PC-3 (cell line): ENCODE measurements at regions of chr2 and their contacts with region 1.

Region 1: GRCh38 chr2:173448938-173449471 is 94.3 kb downstream of the CDCA7 start:
- DNase-seq: peak; percentile 95
- ATAC-seq: peak; percentile 96
- H3K4me3 ChIP-seq: peak overlapping the region; percentile 60
- H3K27ac ChIP-seq: peak overlapping the region; percentile 35; the same call in 1 of the 2 replicates
- H3K4me1 ChIP-seq: peaks cover 11% of the 10 kb centered on the region; the same call in 1 of the 2 replicates
- H3K27me3 ChIP-seq: no peaks in the 10 kb centered on the region
- CTCF ChIP-seq: peak; percentile 86

Region 2: GRCh38 chr2:173555833-173556232 is 106.8 kb after region 1 on chr2:
- CTCF ChIA-PET with region 1: no interaction called
- POLR2A ChIA-PET with region 1: no interaction called
- intact Hi-C with region 1: loop called (anchors 10 kb)
- DNase-seq: no peak
- ATAC-seq: no peak
- H3K4me3 ChIP-seq: no peak overlapping the region
- H3K27ac ChIP-seq: no peak overlapping the region
- H3K4me1 ChIP-seq: 0 out of 2 replicates have a peak, but pooled peaks cover 8% of the 10 kb centered on the region
- H3K27me3 ChIP-seq: no peaks in the 10 kb centered on the region
- CTCF ChIP-seq: no peak

Region 3: DNA sequence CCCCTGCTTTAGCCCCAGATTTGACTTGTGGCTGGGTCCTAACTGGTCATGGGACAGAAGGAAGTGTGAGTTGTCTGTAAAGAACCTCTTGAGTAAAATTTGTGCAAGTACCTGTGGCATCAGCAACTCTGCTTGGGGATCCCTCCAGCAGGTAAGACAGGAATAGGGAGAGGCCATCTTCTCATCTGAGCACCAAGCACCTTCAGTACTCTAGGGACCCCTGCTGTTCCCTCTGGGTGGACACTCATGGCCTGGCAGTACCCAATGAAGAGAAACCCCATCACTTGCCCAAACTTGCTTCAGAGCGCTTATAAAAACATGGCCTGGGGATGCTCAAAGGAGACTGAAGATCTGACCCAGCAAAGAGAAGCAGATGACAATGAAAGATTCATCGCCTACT is 218.4 kb after region 1 on chr2:
- CTCF ChIA-PET with region 1: no interaction called
- POLR2A ChIA-PET with region 1: no interaction called
- intact Hi-C with region 1: loop called (anchors 5 kb)
- DNase-seq: peak; percentile 39
- ATAC-seq: peak; percentile 67
- H3K4me3 ChIP-seq: no peak overlapping the region
- H3K27ac ChIP-seq: no peak overlapping the region
- H3K4me1 ChIP-seq: peaks cover 13% of the 10 kb centered on the region
- H3K27me3 ChIP-seq: no peaks in the 10 kb centered on the region
- CTCF ChIP-seq: peak; percentile 57